Naive thymus-derived CD4-positive, alpha-beta T cell (primary cell): ENCODE measurements at regions of chr1 and their contacts with region 1.

Region 1: GRCh38 chr1:50368179-50369012 is 54.8 kb downstream of the DMRTA2 start:
- DNase-seq: peak in 3 of 9 donors; percentile 5 to 49 (median 8)
- ATAC-seq: no peak
- H3K4me3 ChIP-seq: no peak overlapping the region
- H3K4me3 Mint-ChIP-seq: no peak overlapping the region
- H3K27ac ChIP-seq: no peak overlapping the region
- H3K27ac Mint-ChIP-seq: no peak overlapping the region
- H3K4me1 ChIP-seq: no peaks in the 10 kb centered on the region
- H3K4me1 Mint-ChIP-seq: peaks cover 0 to 5% (median 0%) of the 10 kb centered on the region in 7 donors
- H3K27me3 ChIP-seq: peaks cover 0 to 2% of the 10 kb centered on the region in 2 donors
- H3K27me3 Mint-ChIP-seq: peaks cover 40 to 58% (median 53%) of the 10 kb centered on the region in 5 donors

Region 2: GRCh38 chr1:50393522-50394120 is 25.2 kb after region 1 on chr1:
- CTCF ChIA-PET with region 1: no interaction called
- POLR2A ChIA-PET with region 1: no interaction called
- intact Hi-C with region 1: no loop called
- DNase-seq: no peak
- ATAC-seq: no peak
- H3K4me3 ChIP-seq: no peak overlapping the region
- H3K4me3 Mint-ChIP-seq: no peak overlapping the region
- H3K27ac ChIP-seq: no peak overlapping the region
- H3K27ac Mint-ChIP-seq: no peak overlapping the region
- H3K4me1 ChIP-seq: no peaks in the 10 kb centered on the region
- H3K4me1 Mint-ChIP-seq: no peaks in the 10 kb centered on the region
- H3K27me3 ChIP-seq: no peaks in the 10 kb centered on the region
- H3K27me3 Mint-ChIP-seq: peaks cover 6 to 53% (median 34%) of the 10 kb centered on the region in 5 donors

Region 3: GRCh38 chr1:50412813-50413476 is 44.5 kb after region 1 on chr1:
- CTCF ChIA-PET with region 1: no interaction called
- POLR2A ChIA-PET with region 1: no interaction called
- intact Hi-C with region 1: no loop called
- DNase-seq: no peak
- ATAC-seq: no peak
- H3K4me3 ChIP-seq: no peak overlapping the region
- H3K4me3 Mint-ChIP-seq: no peak overlapping the region
- H3K27ac ChIP-seq: no peak overlapping the region
- H3K27ac Mint-ChIP-seq: no peak overlapping the region
- H3K4me1 ChIP-seq: no peaks in the 10 kb centered on the region
- H3K4me1 Mint-ChIP-seq: peaks cover 2 to 14% (median 10%) of the 10 kb centered on the region in 7 donors
- H3K27me3 ChIP-seq: no peaks in the 10 kb centered on the region
- H3K27me3 Mint-ChIP-seq: peaks cover 51 to 68% (median 67%) of the 10 kb centered on the region in 5 donors

Region 4: GRCh38 chr1:50605186-50605875 is 236.9 kb after region 1 on chr1:
- CTCF ChIA-PET with region 1: no interaction called
- POLR2A ChIA-PET with region 1: no interaction called
- intact Hi-C with region 1: loop called in 1 of 2 experiments (anchors 1 kb)
- DNase-seq: no peak
- ATAC-seq: no peak
- H3K4me3 ChIP-seq: no peak overlapping the region
- H3K4me3 Mint-ChIP-seq: no peak overlapping the region
- H3K27ac ChIP-seq: no peak overlapping the region
- H3K27ac Mint-ChIP-seq: no peak overlapping the region
- H3K4me1 ChIP-seq: no peaks in the 10 kb centered on the region
- H3K4me1 Mint-ChIP-seq: peaks cover 0 to 2% (median 0%) of the 10 kb centered on the region in 7 donors
- H3K27me3 ChIP-seq: no peaks in the 10 kb centered on the region
- H3K27me3 Mint-ChIP-seq: no peaks in the 10 kb centered on the region

Region 5: GRCh38 chr1:50704126-50704525 is 335.7 kb after region 1 on chr1:
- CTCF ChIA-PET with region 1: no interaction called
- POLR2A ChIA-PET with region 1: no interaction called
- intact Hi-C with region 1: loop called (anchors 1 to 2 kb)
- DNase-seq: peak in 4 of 9 donors; percentile 10 to 19 (median 12)
- ATAC-seq: no peak
- H3K4me3 ChIP-seq: no peak overlapping the region
- H3K4me3 Mint-ChIP-seq: no peak overlapping the region
- H3K27ac ChIP-seq: no peak overlapping the region
- H3K27ac Mint-ChIP-seq: no peak overlapping the region
- H3K4me1 ChIP-seq: no peaks in the 10 kb centered on the region
- H3K4me1 Mint-ChIP-seq: peaks cover 0 to 14% (median 5%) of the 10 kb centered on the region in 7 donors
- H3K27me3 ChIP-seq: no peaks in the 10 kb centered on the region
- H3K27me3 Mint-ChIP-seq: no peaks in the 10 kb centered on the region

Region 6: DNA sequence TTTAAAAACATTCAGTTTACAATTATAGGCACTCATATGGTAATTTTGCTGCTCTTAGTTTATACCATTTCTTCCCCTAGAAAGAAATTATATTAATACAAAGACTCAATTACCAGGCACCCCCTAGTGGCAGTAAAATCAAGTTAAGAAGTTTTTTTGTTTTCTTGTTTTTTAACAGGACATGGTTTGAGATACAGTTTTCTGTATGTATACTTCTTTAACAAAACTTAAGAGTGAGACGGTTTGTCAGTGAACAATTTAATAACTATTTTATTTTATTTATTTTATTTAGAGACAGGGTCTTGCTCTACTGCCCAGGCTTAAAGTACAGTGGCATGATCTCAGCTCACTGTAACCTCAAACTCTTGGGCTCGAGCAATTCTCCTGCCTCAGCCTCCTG is 367.0 kb after region 1 on chr1:
- CTCF ChIA-PET with region 1: no interaction called
- POLR2A ChIA-PET with region 1: no interaction called
- intact Hi-C with region 1: loop called in 1 of 2 experiments (anchors 1 kb)
- DNase-seq: no peak
- ATAC-seq: no peak
- H3K4me3 ChIP-seq: no peak overlapping the region
- H3K4me3 Mint-ChIP-seq: no peak overlapping the region
- H3K27ac ChIP-seq: no peak overlapping the region
- H3K27ac Mint-ChIP-seq: no peak overlapping the region
- H3K4me1 ChIP-seq: no peaks in the 10 kb centered on the region
- H3K4me1 Mint-ChIP-seq: peaks cover 3 to 19% (median 6%) of the 10 kb centered on the region in 7 donors
- H3K27me3 ChIP-seq: no peaks in the 10 kb centered on the region
- H3K27me3 Mint-ChIP-seq: no peaks in the 10 kb centered on the region